Left cardiac atrium (tissue), 4 donors: ENCODE measurements at regions of chr1 and their contacts with region 1.

Region 1: GRCh38 chr1:177546346-177546745 is 375.6 kb downstream of the BRINP2 start:
- DNase-seq: no peak
- ATAC-seq: no peak

Region 2: DNA sequence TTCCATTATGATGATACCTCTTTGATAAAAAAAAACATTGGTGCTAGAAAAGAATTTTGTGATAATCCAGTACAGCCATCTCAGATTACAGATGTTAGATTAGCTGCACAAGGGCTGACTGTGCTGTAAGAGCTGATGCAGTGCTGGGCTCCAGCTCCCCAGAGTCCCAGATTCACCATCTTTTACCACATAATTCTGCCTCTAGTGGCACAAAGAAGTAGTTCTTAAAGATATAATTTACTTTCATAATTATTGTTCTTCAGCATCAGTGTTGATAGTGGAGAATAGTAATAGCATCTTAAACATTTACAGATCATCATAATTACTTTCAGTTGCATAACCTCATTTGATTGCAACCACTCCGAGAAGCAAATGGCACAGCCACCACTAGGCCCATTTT is 113.4 kb before region 1 on chr1:
- intact Hi-C with region 1: no loop called
- DNase-seq: no peak
- ATAC-seq: no peak

Region 3: GRCh38 chr1:177567407-177567806 is 21.1 kb after region 1 on chr1:
- intact Hi-C with region 1: no loop called
- DNase-seq: no peak
- ATAC-seq: no peak

Region 4: DNA sequence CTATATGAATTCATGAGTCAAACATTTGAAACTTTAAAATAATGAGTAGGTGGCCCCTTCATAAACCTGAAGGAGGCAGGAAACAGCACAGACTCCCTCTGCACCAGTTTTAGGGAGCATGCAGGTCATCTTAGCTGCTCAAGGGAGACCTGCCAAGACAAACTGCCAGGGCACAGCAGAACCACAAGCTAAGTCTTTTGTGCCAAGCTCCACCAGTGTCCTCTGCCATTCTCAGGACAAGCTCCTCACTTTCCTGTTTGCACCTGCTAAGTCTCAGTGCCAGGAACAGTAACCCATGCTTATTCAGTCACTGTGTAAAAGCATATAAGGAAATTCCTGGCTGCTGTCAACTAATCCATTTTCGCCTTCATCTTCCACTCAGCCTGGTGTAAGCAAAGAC is 54.6 kb after region 1 on chr1:
- intact Hi-C with region 1: loop called in 1 of 2 experiments (anchors 10 kb)
- DNase-seq: no peak
- ATAC-seq: no peak